ENCODE measurements at regions of chr10 and their contacts with region 1.

Region 1: DNA sequence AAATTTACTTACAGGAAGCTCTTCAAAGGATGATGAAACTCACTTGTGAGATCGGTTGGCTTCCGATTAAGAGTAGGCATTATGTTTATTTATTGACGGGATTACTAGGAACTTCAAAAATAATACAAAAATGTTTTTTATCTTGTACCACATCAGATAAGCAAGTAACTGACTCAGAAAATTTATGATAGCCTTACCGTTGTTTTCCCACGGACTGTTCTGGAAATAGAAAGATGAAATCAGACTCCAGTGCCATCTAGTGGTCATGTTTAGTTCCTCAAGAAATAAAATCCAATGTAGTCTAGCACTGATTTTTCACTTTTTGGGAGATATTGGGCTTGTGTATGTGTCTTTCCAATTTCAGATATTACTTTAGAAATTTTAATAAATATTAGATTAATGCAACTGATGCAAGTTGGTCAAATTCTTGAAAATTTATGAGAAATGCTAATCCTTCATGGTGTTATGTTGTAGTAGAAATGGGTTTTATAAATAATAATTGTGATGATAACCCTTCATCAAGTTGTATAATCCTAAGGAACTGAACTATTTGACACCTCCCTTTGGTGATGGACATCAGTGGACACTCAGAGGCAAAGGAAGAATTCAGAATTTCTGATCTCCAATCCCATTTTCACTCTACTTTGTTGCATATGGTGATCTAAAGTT is 168.8 kb downstream of the TMEM26 start:
- H3K4me3 Mint-ChIP-seq: no peak overlapping the region
- H3K27ac Mint-ChIP-seq: no peak overlapping the region
- H3K4me1 Mint-ChIP-seq: peaks cover 14% of the 10 kb centered on the region
- H3K27me3 Mint-ChIP-seq: peaks cover 15% of the 10 kb centered on the region

Region 2: GRCh38 chr10:60816628-60817397 is 467.5 kb before region 1 on chr10:
- intact Hi-C with region 1: loop called (anchors 2 kb)
- H3K4me3 Mint-ChIP-seq: peak overlapping the region; percentile 57
- H3K27ac Mint-ChIP-seq: peak overlapping the region; percentile 82
- H3K4me1 Mint-ChIP-seq: peaks cover 23% of the 10 kb centered on the region
- H3K27me3 Mint-ChIP-seq: peaks cover 2% of the 10 kb centered on the region

Region 3: GRCh38 chr10:60964257-60965235 is 319.8 kb before region 1 on chr10:
- intact Hi-C with region 1: loop called (anchors 10 kb)
- H3K4me3 Mint-ChIP-seq: no peak overlapping the region
- H3K27ac Mint-ChIP-seq: no peak overlapping the region
- H3K4me1 Mint-ChIP-seq: peaks cover 34% of the 10 kb centered on the region
- H3K27me3 Mint-ChIP-seq: peaks cover 8% of the 10 kb centered on the region

Region 4: GRCh38 chr10:61140765-61141392 is 143.5 kb before region 1 on chr10:
- intact Hi-C with region 1: loop called (anchors 5 kb)
- H3K4me3 Mint-ChIP-seq: no peak overlapping the region
- H3K27ac Mint-ChIP-seq: no peak overlapping the region
- H3K4me1 Mint-ChIP-seq: peaks cover 5% of the 10 kb centered on the region
- H3K27me3 Mint-ChIP-seq: no peaks in the 10 kb centered on the region

Region 5: GRCh38 chr10:61390851-61391250 is 106.5 kb after region 1 on chr10:
- intact Hi-C with region 1: loop called (anchors 1 kb)
- H3K4me3 Mint-ChIP-seq: peak overlapping the region; percentile 2
- H3K27ac Mint-ChIP-seq: peak overlapping the region; percentile 96
- H3K4me1 Mint-ChIP-seq: peaks cover 53% of the 10 kb centered on the region
- H3K27me3 Mint-ChIP-seq: no peaks in the 10 kb centered on the region

Region 6: DNA sequence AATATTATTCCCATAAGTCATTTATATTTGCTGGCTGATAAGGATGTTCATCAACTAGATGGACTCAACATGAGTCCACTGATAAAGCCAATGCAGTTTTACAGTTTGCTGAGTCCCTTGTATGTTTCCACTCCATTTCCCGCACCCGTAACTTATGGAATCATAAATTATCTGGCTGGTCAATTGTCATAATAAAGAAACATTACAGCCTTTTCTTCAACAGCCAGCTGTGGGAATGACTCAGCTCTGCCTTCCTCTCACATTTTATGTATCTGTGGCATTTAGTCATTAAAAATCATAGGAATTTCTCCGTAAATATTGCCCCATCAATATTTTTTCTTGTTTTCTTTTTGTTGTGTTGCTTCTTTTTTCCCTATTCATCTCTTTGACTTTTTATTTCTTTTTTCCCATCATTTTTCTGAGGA is 191.1 kb after region 1 on chr10:
- intact Hi-C with region 1: loop called (anchors 10 kb)
- H3K4me3 Mint-ChIP-seq: no peak overlapping the region
- H3K27ac Mint-ChIP-seq: no peak overlapping the region
- H3K4me1 Mint-ChIP-seq: peaks cover 27% of the 10 kb centered on the region
- H3K27me3 Mint-ChIP-seq: peaks cover 13% of the 10 kb centered on the region

Region 7: DNA sequence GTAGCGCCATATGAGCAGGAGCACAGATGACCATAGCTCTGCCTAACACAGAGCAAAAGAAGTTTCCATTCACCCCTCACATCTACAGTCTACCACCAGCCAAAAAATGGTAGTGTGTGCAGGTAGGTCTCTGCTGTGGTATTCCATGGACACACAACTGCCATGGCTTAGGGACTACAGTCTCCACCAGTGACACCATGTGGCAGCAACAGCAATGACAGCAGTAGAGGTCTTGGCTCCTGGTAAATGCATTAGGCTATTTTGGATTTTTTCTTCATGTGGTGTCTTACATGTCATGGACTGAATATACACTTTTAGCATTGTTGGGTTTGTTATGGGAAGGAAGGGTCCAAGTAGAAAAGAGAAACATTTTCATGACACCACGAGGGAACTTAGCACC is 308.2 kb after region 1 on chr10:
- intact Hi-C with region 1: loop called (anchors 10 kb)
- H3K4me3 Mint-ChIP-seq: no peak overlapping the region
- H3K27ac Mint-ChIP-seq: no peak overlapping the region
- H3K4me1 Mint-ChIP-seq: peaks cover 7% of the 10 kb centered on the region
- H3K27me3 Mint-ChIP-seq: no peaks in the 10 kb centered on the region